ENCODE measurements at regions of chrX and their contacts with region 1.

Region 1: GRCh38 chrX:154019633-154020528 is at the start of gene IRAK1:
- DNase-seq: peak; percentile 27
- H3K4me3 ChIP-seq: peak within 1 kb of the TSS; percentile 37 to 44
- H3K27ac ChIP-seq: peak within 1 kb of the TSS; percentile 87 to 88
- H3K4me1 ChIP-seq: no peaks in the 10 kb centered on the region
- H3K27me3 ChIP-seq: no peaks in the 10 kb centered on the region
- CTCF ChIP-seq: peak in 1 of 4 experiments; percentile 26
- POLR2A ChIP-seq: no peak
- total RNA-seq, gene IRAK1: 113 to 122 TPM

Region 2: GRCh38 chrX:154097597-154098541 is 78.0 kb after region 1 on chrX and contains the start of gene MECP2:
- intact Hi-C with region 1: loop called (anchors 10 kb)
- DNase-seq: peak; percentile 89
- H3K4me3 ChIP-seq: peak within 1 kb of the TSS; percentile 62 to 68
- H3K27ac ChIP-seq: peak within 1 kb of the TSS; percentile 96 to 97
- H3K4me1 ChIP-seq: no peaks in the 10 kb centered on the region
- H3K27me3 ChIP-seq: no peaks in the 10 kb centered on the region
- CTCF ChIP-seq: peak in 2 of 4 experiments; percentile 4 to 15
- POLR2A ChIP-seq: no peak
- total RNA-seq, gene MECP2: 54.4 to 85.2 TPM

Measured in prostate gland (tissue), 2 donors.